HCT116 (cell line): ENCODE measurements at regions of chr11 and their contacts with region 1.

Region 1: DNA sequence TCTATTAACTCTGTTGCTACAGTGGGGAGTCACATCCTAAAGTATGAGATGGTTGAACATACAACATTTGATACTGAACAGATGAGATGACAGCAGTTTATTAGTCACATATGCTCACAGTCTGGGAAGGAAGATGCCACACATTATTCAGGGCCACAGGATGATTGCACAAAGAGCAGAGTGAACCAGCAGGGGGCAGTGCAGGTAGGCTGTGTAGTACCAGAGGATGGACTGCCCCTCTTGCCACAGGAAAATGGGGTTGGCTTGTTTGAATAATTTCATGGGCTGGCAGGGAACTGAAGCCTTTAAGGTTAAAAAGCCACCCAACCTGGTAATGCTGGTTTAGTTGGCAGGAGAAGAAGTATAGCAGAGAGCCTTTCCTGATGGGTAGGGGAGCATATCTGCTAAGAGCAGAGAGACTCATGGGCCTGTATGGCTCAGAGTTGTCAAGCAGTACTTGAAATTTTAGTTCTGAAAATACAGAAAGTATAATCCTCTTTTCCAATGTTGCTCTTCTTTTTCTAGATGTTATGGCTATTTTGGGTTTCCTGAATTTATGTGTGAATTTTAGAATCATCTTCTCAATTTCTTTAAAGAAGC is 180.4 kb upstream of the B3GAT1 start:
- DNase-seq: peak; percentile 49
- ATAC-seq: peak; percentile 98
- H3K4me3 ChIP-seq: no peak overlapping the region
- H3K27ac ChIP-seq: no peak overlapping the region
- H3K4me1 ChIP-seq: no peaks in the 10 kb centered on the region
- H3K27me3 ChIP-seq: peaks cover 22% of the 10 kb centered on the region; the same call in 1 of the 2 replicates
- CTCF ChIP-seq: peak; percentile 57 to 83 (median 82); a peak in 5 of 6 replicates
- POLR2A ChIP-seq: no peak
- RAD21 ChIP-seq: peak; percentile 71

Region 2: GRCh38 chr11:134725716-134726639 is 133.5 kb after region 1 on chr11:
- CTCF ChIA-PET with region 1: no interaction called
- POLR2A ChIA-PET with region 1: no interaction called
- RAD21 ChIA-PET with region 1: no interaction called
- intact Hi-C with region 1: loop called (anchors 1 kb)
- DNase-seq: peak; percentile 35
- ATAC-seq: peak; percentile 92
- H3K4me3 ChIP-seq: no peak overlapping the region
- H3K27ac ChIP-seq: no peak overlapping the region
- H3K4me1 ChIP-seq: no peaks in the 10 kb centered on the region
- H3K27me3 ChIP-seq: peaks cover 27% of the 10 kb centered on the region; the same call in 1 of the 2 replicates
- CTCF ChIP-seq: peak; percentile 66 to 79 (median 71); a peak in 5 of 6 replicates
- POLR2A ChIP-seq: no peak
- RAD21 ChIP-seq: peak; percentile 60

Region 3: GRCh38 chr11:134819041-134819440 is 226.6 kb after region 1 on chr11:
- CTCF ChIA-PET with region 1: no interaction called
- POLR2A ChIA-PET with region 1: no interaction called
- RAD21 ChIA-PET with region 1: no interaction called
- intact Hi-C with region 1: no loop called
- DNase-seq: no peak
- ATAC-seq: peak; percentile 56; the same call in 1 of the 2 replicates
- H3K4me3 ChIP-seq: no peak overlapping the region
- H3K27ac ChIP-seq: no peak overlapping the region
- H3K4me1 ChIP-seq: peaks cover 6 to 29% of the 10 kb centered on the region in 2 experiments; a peak in 3 of 4 replicates
- H3K27me3 ChIP-seq: peaks cover 41% of the 10 kb centered on the region
- CTCF ChIP-seq: peak; percentile 10 to 39 (median 37); a peak in 4 of 6 replicates
- POLR2A ChIP-seq: no peak
- RAD21 ChIP-seq: no peak

Region 4: DNA sequence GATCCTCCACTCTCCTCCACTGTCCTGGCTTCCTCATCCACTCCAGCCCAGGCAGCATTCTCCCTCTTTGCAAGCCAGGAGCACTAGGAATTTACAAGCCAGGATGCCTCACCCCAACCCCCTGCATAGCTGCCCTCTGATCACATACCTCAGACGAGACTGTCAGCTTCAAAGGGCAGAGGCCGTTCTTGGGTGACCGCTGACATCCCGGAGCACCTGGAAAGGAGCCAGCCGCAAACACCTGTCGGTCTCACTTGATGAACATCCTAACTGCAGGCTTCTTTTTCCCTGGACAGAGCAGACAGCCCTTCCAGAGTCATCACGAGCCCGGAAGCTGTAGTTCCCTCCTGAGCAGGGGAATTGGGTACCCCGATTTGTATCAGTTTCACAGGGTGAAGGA is 270.8 kb after region 1 on chr11:
- CTCF ChIA-PET with region 1: no interaction called
- POLR2A ChIA-PET with region 1: no interaction called
- RAD21 ChIA-PET with region 1: no interaction called
- intact Hi-C with region 1: loop called (anchors 2 kb)
- DNase-seq: no peak
- ATAC-seq: no peak
- H3K4me3 ChIP-seq: no peak overlapping the region
- H3K27ac ChIP-seq: no peak overlapping the region
- H3K4me1 ChIP-seq: peaks cover 0 to 2% of the 10 kb centered on the region in 2 experiments; a peak in 1 of 4 replicates
- H3K27me3 ChIP-seq: no peaks in the 10 kb centered on the region; the same call in 1 of the 2 replicates
- CTCF ChIP-seq: no peak
- POLR2A ChIP-seq: no peak
- RAD21 ChIP-seq: no peak